Right ventricle myocardium superior (tissue), 1 donor: ENCODE measurements at regions of chr2 and their contacts with region 1.

Region 1: DNA sequence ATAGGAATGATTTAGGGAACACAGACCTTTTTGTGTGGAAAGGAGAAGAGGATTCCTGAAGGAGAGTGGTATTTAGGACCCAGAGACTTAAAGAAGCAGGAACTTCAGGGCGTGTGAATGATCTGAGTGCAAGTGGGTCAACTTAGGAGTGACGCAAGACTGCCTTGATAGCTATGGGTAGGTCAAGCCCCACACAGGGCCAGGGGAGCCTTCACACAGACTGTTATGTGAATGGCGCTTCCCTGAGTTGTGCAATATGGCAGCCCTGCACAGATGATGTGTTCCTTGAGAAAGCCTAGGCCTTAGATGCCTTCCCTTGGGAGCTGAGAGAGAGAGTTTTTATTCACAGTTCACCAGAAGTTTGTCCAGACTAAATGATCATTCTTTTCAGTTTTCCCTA is 47.1 kb upstream of the IGFBP5 start:
- DNase-seq: peak; percentile 74
- ATAC-seq: peak; percentile 81

Region 2: DNA sequence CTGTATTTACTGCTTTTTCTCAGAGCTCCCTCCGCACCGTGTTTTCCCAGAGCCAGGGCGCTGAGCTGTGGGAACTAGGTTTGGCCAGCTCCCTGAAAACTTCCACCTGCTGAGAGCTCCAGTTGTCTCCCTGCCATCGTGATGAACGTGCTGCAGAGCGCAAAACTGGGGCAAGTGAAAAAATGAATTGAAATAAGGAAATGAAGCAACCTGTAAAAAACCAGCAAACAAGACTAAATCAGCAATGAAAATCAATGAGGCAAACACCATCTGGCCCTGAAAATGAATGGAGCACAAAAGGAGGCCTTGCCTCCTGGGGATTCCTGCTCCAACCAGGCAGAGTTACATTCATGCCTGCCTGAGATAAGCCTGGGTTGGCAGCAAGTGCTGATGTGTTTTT is 500.0 kb before region 1 on chr2:
- intact Hi-C with region 1: no loop called
- DNase-seq: no peak
- ATAC-seq: peak; percentile 49

Region 3: GRCh38 chr2:216781709-216782108 is 39.3 kb after region 1 on chr2:
- intact Hi-C with region 1: loop called (anchors 2 kb)
- DNase-seq: no peak
- ATAC-seq: no peak

Region 4: DNA sequence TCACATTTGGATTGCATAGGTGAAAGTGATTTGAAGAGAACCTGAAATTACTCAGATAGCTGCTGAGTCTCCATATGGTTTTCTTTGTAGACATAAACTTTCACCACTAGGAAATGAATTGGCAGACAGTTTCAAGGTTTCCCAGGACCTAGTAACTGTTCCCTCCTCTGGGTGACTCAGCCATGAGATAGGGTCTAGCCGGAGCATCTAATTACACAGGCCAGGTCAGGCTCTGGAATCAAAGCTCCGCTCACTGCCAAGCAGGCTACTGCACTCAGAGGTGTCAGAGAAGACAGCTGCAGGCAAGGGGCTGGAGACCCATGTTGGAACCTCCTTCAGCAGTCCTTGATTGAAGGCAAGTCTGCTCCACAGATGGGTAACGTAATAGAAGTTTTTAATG is 831.2 kb after region 1 on chr2:
- intact Hi-C with region 1: no loop called
- DNase-seq: no peak
- ATAC-seq: peak; percentile 48